Activated T-helper 1 cell treated with anti-CD3 and anti-CD28 coated beads, Interleukin-12 subunit alpha, Interleukin-12 subunit beta, Interleukin-2, Interleukin-4 antibody, amounts not matched to agents 30 ng/mL and 10 ng/mL and 1 ng/mL, durations not matched to agents 14 hours and 24 hours and 36 hours (primary cell): ENCODE measurements at regions of chr1 and their contacts with region 1.

Region 1: DNA sequence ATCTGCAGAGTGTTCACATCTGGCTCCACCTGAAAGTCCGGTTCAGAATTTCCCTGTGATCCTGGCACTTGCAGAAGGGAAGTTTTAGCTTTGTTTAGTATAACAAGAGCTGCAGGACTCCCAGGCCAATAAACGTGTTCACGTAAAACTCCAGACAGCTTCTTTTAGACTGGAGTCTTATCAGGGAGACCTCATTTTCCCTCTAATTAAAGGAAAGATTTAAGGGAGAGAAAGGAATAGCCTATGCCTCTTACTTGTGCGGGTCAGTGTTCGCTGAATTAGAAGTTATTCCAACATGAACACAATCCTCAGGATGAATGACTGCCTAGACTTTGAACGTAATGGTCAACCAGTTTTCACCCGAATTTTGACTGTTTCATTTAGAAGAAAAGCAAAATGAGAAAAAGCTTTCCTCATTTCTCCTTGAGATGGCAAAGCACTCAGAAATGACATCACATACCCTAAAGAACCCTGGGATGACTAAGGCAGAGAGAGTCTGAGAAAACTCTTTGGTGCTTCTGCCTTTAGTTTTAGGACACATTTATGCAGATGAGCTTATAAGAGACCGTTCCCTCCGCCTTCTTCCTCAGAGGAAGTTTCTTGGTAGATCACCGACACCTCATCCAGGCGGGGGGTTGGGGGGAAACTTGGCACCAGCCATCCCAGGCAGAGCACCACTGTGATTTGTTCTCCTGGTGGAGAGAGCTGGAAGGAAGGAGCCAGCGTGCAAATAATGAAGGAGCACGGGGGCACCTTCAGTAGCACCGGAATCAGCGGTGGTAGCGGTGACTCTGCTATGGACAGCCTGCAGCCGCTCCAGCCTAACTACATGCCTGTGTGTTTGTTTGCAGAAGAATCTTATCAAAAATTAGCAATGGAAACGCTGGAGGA is 202.1 kb upstream of the SGIP1 start:
- DNase-seq: peak; percentile 35
- H3K4me3 Mint-ChIP-seq: peak overlapping the region; percentile 98
- H3K27ac Mint-ChIP-seq: peak overlapping the region; percentile 95
- H3K4me1 Mint-ChIP-seq: peaks cover 60% of the 10 kb centered on the region
- H3K27me3 Mint-ChIP-seq: no peaks in the 10 kb centered on the region

Region 2: GRCh38 chr1:65067491-65068201 is 1264.3 kb before region 1 on chr1:
- intact Hi-C with region 1: loop called (anchors 10 kb)
- DNase-seq: peak; percentile 25
- H3K4me3 Mint-ChIP-seq: peak overlapping the region; percentile 89
- H3K27ac Mint-ChIP-seq: peak overlapping the region; percentile 95
- H3K4me1 Mint-ChIP-seq: peaks cover 41% of the 10 kb centered on the region
- H3K27me3 Mint-ChIP-seq: no peaks in the 10 kb centered on the region

Region 3: GRCh38 chr1:66282343-66282852 is 49.5 kb before region 1 on chr1:
- intact Hi-C with region 1: loop called (anchors 1 kb)
- DNase-seq: peak; percentile 73
- H3K4me3 Mint-ChIP-seq: peak overlapping the region; percentile 62
- H3K27ac Mint-ChIP-seq: peak overlapping the region; percentile 88
- H3K4me1 Mint-ChIP-seq: peaks cover 90% of the 10 kb centered on the region
- H3K27me3 Mint-ChIP-seq: no peaks in the 10 kb centered on the region

Region 4: DNA sequence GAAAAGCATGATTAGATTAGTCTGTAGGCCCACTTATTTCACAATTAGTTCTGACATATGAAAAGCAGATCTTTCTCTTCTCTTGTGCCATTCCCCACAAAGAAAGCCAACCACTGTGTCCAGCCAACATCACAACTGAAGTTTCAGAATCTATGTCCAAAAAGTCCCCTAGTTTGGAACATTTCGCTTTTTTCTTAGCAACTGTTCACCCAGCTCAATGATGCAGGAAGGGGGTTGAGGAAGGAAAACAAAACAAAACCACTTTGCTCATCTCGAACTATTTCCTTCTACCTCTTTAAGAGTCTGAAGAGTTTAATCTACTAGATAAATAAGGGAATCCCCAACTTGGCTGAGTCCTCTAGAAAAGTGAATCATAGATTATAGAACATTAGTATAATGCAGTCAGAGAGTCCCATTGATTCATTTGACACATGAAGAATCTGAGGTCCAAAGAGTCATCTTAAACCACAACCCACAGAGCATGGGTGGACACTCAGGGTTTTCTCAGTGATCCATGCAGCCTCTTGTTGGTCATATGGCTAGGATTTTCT is 42.7 kb after region 1 on chr1:
- intact Hi-C with region 1: loop called (anchors 1 kb)
- DNase-seq: peak; percentile 19
- H3K4me3 Mint-ChIP-seq: peak overlapping the region; percentile 77
- H3K27ac Mint-ChIP-seq: peak overlapping the region; percentile 96
- H3K4me1 Mint-ChIP-seq: peaks cover 69% of the 10 kb centered on the region
- H3K27me3 Mint-ChIP-seq: no peaks in the 10 kb centered on the region

Region 5: GRCh38 chr1:66446261-66447001 is 114.5 kb after region 1 on chr1:
- intact Hi-C with region 1: loop called (anchors 1 kb)
- DNase-seq: peak; percentile 39
- H3K4me3 Mint-ChIP-seq: peak overlapping the region; percentile 56
- H3K27ac Mint-ChIP-seq: peak overlapping the region; percentile 95
- H3K4me1 Mint-ChIP-seq: peaks cover 32% of the 10 kb centered on the region
- H3K27me3 Mint-ChIP-seq: peaks cover 3% of the 10 kb centered on the region

Region 6: GRCh38 chr1:67300561-67300960 is 968.7 kb after region 1 on chr1:
- intact Hi-C with region 1: loop called (anchors 5 kb)
- DNase-seq: no peak
- H3K4me3 Mint-ChIP-seq: peak overlapping the region; percentile 35
- H3K27ac Mint-ChIP-seq: peak overlapping the region; percentile 63
- H3K4me1 Mint-ChIP-seq: peaks cover 88% of the 10 kb centered on the region
- H3K27me3 Mint-ChIP-seq: no peaks in the 10 kb centered on the region